PC-3 (cell line): ENCODE measurements at regions of chr9 and their contacts with region 1.

Region 1: GRCh38 chr9:115997923-115998322 is 155.7 kb upstream of the PAPPA start:
- DNase-seq: peak; percentile 54
- ATAC-seq: no peak
- H3K4me3 ChIP-seq: no peak overlapping the region
- H3K27ac ChIP-seq: peak overlapping the region; percentile 79
- H3K4me1 ChIP-seq: peaks cover 52% of the 10 kb centered on the region
- H3K27me3 ChIP-seq: no peaks in the 10 kb centered on the region
- CTCF ChIP-seq: no peak

Region 2: GRCh38 chr9:115972843-115973595 is 24.9 kb before region 1 on chr9:
- CTCF ChIA-PET with region 1: no interaction called
- POLR2A ChIA-PET with region 1: no interaction called
- intact Hi-C with region 1: loop called (anchors 2 kb)
- DNase-seq: peak; percentile 45
- ATAC-seq: peak; percentile 48
- H3K4me3 ChIP-seq: no peak overlapping the region
- H3K27ac ChIP-seq: peak overlapping the region; percentile 68
- H3K4me1 ChIP-seq: peaks cover 20% of the 10 kb centered on the region
- H3K27me3 ChIP-seq: no peaks in the 10 kb centered on the region
- CTCF ChIP-seq: no peak

Region 3: GRCh38 chr9:116087246-116087645 is 89.3 kb after region 1 on chr9:
- CTCF ChIA-PET with region 1: no interaction called
- POLR2A ChIA-PET with region 1: no interaction called
- intact Hi-C with region 1: loop called (anchors 10 kb)
- DNase-seq: peak; percentile 39
- ATAC-seq: peak; percentile 31; the same call in 1 of the 2 replicates
- H3K4me3 ChIP-seq: no peak overlapping the region
- H3K27ac ChIP-seq: peak overlapping the region; percentile 85
- H3K4me1 ChIP-seq: peaks cover 16% of the 10 kb centered on the region
- H3K27me3 ChIP-seq: no peaks in the 10 kb centered on the region
- CTCF ChIP-seq: no peak

Region 4: GRCh38 chr9:116144038-116144437 is 146.1 kb after region 1 on chr9:
- CTCF ChIA-PET with region 1: no interaction called
- POLR2A ChIA-PET with region 1: no interaction called
- intact Hi-C with region 1: loop called (anchors 5 kb)
- DNase-seq: peak; percentile 82
- ATAC-seq: peak; percentile 96
- H3K4me3 ChIP-seq: peak overlapping the region; percentile 51; the same call in 1 of the 2 replicates
- H3K27ac ChIP-seq: peak overlapping the region; percentile 93
- H3K4me1 ChIP-seq: peaks cover 29% of the 10 kb centered on the region
- H3K27me3 ChIP-seq: no peaks in the 10 kb centered on the region
- CTCF ChIP-seq: no peak

Region 5: GRCh38 chr9:116494815-116495634 is 497.1 kb after region 1 on chr9:
- CTCF ChIA-PET with region 1: no interaction called
- POLR2A ChIA-PET with region 1: no interaction called
- intact Hi-C with region 1: loop called (anchors 10 kb)
- DNase-seq: peak; percentile 46
- ATAC-seq: peak; percentile 28; the same call in 1 of the 2 replicates
- H3K4me3 ChIP-seq: no peak overlapping the region
- H3K27ac ChIP-seq: no peak overlapping the region
- H3K4me1 ChIP-seq: no peaks in the 10 kb centered on the region
- H3K27me3 ChIP-seq: no peaks in the 10 kb centered on the region
- CTCF ChIP-seq: peak; percentile 69